ENCODE measurements at regions of chr16 and their contacts with region 1.

Region 1: GRCh38 chr16:55701442-55702319 is 45.9 kb downstream of the SLC6A2 start:
- DNase-seq: peak; percentile 64 to 70 (median 67)
- ATAC-seq: peak; percentile 62 to 78 (median 74)
- H3K4me3 ChIP-seq: no peak overlapping the region
- H3K27ac ChIP-seq: no peak overlapping the region
- H3K4me1 ChIP-seq: no peaks in the 10 kb centered on the region
- H3K27me3 ChIP-seq: no peaks in the 10 kb centered on the region
- CTCF ChIP-seq: peak; percentile 61 to 72 (median 68)
- POLR2A ChIP-seq: no peak

Region 2: DNA sequence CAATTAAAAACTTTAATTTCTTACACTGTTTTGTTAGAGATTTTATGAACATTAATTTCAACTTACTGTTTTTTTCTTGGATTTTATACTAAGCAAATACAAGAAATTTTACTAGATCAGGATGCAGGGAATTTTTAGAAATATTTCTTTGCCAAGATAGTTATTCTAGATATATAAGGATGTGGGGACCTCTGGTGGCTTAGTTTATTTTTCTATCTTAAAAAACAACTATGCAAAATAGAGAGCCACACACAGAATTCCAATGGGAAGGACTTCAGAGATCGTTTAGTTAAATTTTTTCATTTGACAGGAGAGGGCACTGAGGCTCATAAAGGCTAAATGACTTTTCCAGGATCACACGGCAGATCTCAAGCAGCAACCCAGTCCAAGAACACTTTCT is 158.2 kb before region 1 on chr16:
- intact Hi-C with region 1: loop called in 1 of 2 experiments (anchors 10 kb)
- DNase-seq: no peak
- ATAC-seq: peak; percentile 66 to 74 (median 72)
- H3K4me3 ChIP-seq: no peak overlapping the region
- H3K27ac ChIP-seq: no peak overlapping the region
- H3K4me1 ChIP-seq: no peaks in the 10 kb centered on the region
- H3K27me3 ChIP-seq: no peaks in the 10 kb centered on the region
- CTCF ChIP-seq: peak; percentile 28 to 50 (median 47)
- POLR2A ChIP-seq: no peak

Measured in right lobe of liver (tissue), 6 donors.